ENCODE measurements at regions of chr3 and their contacts with region 1.

Region 1: GRCh38 chr3:53219895-53220483 is 35.8 kb downstream of the TKT start:
- DNase-seq: peak; percentile 92
- H3K4me3 Mint-ChIP-seq: no peak overlapping the region
- H3K27ac Mint-ChIP-seq: peak overlapping the region; percentile 67
- H3K4me1 Mint-ChIP-seq: no peaks in the 10 kb centered on the region
- H3K27me3 Mint-ChIP-seq: no peaks in the 10 kb centered on the region
- CTCF ChIP-seq: peak; percentile 81

Region 2: GRCh38 chr3:53269888-53270880 is 50.2 kb after region 1 on chr3:
- CTCF ChIA-PET with region 1: interaction called, 4 read pairs
- intact Hi-C with region 1: loop called (anchors 1 kb)
- DNase-seq: peak; percentile 94
- H3K4me3 Mint-ChIP-seq: peak overlapping the region; percentile 57
- H3K27ac Mint-ChIP-seq: peak overlapping the region; percentile 98
- H3K4me1 Mint-ChIP-seq: peaks cover 29% of the 10 kb centered on the region
- H3K27me3 Mint-ChIP-seq: no peaks in the 10 kb centered on the region
- CTCF ChIP-seq: no peak

Region 3: GRCh38 chr3:53287131-53287629 is 67.2 kb after region 1 on chr3:
- CTCF ChIA-PET with region 1: interaction called, 3 read pairs
- intact Hi-C with region 1: loop called (anchors 5 kb)
- DNase-seq: no peak
- H3K4me3 Mint-ChIP-seq: no peak overlapping the region
- H3K27ac Mint-ChIP-seq: no peak overlapping the region
- H3K4me1 Mint-ChIP-seq: no peaks in the 10 kb centered on the region
- H3K27me3 Mint-ChIP-seq: no peaks in the 10 kb centered on the region
- CTCF ChIP-seq: no peak

Region 4: GRCh38 chr3:53350652-53351051 is 130.7 kb after region 1 on chr3:
- CTCF ChIA-PET with region 1: no interaction called
- intact Hi-C with region 1: loop called (anchors 5 kb)
- DNase-seq: no peak
- H3K4me3 Mint-ChIP-seq: no peak overlapping the region
- H3K27ac Mint-ChIP-seq: no peak overlapping the region
- H3K4me1 Mint-ChIP-seq: peaks cover 11% of the 10 kb centered on the region
- H3K27me3 Mint-ChIP-seq: no peaks in the 10 kb centered on the region
- CTCF ChIP-seq: no peak

Region 5: DNA sequence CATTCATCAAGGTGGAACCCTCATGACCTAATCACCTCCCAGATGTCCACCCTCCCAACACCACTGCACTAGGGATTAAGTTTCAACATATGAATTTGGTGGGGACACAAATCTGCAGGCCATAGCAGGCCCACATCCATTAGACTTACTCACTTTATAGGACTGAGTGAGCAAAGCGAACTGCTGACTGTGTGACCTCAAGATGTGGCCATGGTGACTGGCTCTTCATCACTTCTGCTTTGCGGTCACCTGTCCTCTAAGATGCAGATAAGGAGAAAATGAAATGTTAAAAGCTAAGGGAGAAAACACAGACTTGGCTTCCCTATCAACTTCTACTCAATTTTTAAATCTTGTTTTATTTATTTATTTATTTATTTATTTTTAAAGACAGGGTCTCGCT is 141.9 kb after region 1 on chr3:
- CTCF ChIA-PET with region 1: no interaction called
- intact Hi-C with region 1: no loop called
- DNase-seq: no peak
- H3K4me3 Mint-ChIP-seq: no peak overlapping the region
- H3K27ac Mint-ChIP-seq: no peak overlapping the region
- H3K4me1 Mint-ChIP-seq: no peaks in the 10 kb centered on the region
- H3K27me3 Mint-ChIP-seq: no peaks in the 10 kb centered on the region
- CTCF ChIP-seq: no peak

Region 6: GRCh38 chr3:53531749-53532148 is 311.8 kb after region 1 on chr3:
- CTCF ChIA-PET with region 1: no interaction called
- intact Hi-C with region 1: no loop called
- DNase-seq: peak; percentile 57
- H3K4me3 Mint-ChIP-seq: no peak overlapping the region
- H3K27ac Mint-ChIP-seq: no peak overlapping the region
- H3K4me1 Mint-ChIP-seq: peaks cover 17% of the 10 kb centered on the region
- H3K27me3 Mint-ChIP-seq: no peaks in the 10 kb centered on the region
- CTCF ChIP-seq: peak; percentile 35